ENCODE measurements at regions of chr5 and their contacts with region 1.

Region 1: GRCh38 chr5:37738057-37738691 is 101.7 kb downstream of the GDNF start:
- DNase-seq: peak; percentile 90
- ATAC-seq: peak; percentile 85
- H3K4me3 ChIP-seq: no peak overlapping the region
- H3K27ac ChIP-seq: peak overlapping the region; percentile 12
- H3K4me1 ChIP-seq: peaks cover 21% of the 10 kb centered on the region
- H3K27me3 ChIP-seq: no peaks in the 10 kb centered on the region
- CTCF ChIP-seq: no peak

Region 2: DNA sequence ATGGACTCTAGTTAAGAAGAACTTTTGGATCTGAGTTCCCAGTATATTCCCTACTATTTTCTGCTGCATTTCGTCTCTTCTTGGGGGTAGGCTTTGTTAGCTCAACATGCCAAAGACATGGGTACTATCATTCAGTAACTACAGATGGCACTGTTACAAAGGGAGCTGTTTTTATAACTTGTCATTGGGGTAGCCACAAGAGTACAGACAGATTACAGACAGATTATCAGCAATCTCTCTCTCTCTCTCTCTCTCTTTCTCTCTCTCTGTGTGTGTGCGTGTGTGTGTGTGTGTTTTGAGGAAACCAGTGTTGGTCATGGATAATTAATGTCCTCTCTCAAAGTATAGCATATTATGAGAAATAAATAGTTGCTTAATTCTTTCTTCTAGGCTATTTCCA is 243.0 kb before region 1 on chr5:
- CTCF ChIA-PET with region 1: no interaction called
- POLR2A ChIA-PET with region 1: no interaction called
- intact Hi-C with region 1: no loop called
- DNase-seq: peak; percentile 56
- ATAC-seq: peak; percentile 41
- H3K4me3 ChIP-seq: no peak overlapping the region
- H3K27ac ChIP-seq: peak overlapping the region; percentile 65
- H3K4me1 ChIP-seq: peaks cover 21% of the 10 kb centered on the region
- H3K27me3 ChIP-seq: no peaks in the 10 kb centered on the region
- CTCF ChIP-seq: peak; percentile 56

Region 3: DNA sequence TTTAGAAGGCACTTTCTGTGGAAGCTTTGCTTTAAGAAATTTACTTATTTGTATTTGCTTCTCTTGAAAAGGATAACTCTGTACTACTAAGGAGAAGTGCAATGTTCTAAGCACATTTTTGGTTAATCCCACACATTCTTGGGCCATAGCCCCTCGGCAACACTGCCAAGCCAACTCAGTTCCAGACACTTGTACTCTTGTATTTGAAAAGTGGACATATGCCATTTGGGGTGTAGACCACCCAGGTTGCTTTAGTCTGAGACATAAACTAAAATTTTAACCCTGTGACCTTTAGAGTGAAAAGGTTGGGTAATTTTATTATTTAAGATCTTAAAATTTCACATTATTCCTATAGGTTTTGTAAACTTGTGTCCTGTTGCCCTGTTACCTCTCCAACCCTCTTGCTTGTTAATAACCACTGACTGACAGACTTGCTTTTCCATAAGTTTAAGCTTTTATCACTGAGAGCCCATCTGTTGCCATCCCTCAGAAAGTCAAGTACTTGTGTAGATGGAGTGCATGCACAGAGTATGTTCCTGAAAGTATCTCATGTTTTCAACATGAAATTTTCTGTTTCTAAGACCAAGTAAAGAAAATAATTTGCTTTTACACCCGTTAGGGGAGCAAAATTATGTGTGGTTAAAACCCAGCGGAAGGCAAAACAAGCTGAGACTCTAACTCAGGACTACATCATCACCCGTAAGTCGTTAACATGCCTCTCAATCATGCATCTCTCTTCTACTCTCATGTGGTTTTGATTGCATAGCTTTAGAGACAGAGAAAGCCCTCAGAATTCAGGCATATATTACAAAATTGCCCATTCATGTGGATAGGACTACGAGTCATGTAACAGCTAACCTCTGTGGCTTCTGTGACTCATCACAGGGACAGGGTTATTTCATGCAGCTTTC is 15.7 kb before region 1 on chr5:
- CTCF ChIA-PET with region 1: no interaction called
- POLR2A ChIA-PET with region 1: no interaction called
- intact Hi-C with region 1: loop called (anchors 2 kb)
- DNase-seq: peak; percentile 96
- ATAC-seq: peak; percentile 92
- H3K4me3 ChIP-seq: no peak overlapping the region
- H3K27ac ChIP-seq: peak overlapping the region; percentile 53
- H3K4me1 ChIP-seq: peaks cover 41% of the 10 kb centered on the region
- H3K27me3 ChIP-seq: no peaks in the 10 kb centered on the region
- CTCF ChIP-seq: no peak

Measured in PC-3 (cell line).